Heart left ventricle (tissue), 16 donors: ENCODE measurements at regions of chr1 and their contacts with region 1.

Region 1: GRCh38 chr1:110209715-110210603 is at the start of gene KCNC4:
- DNase-seq: peak; percentile 92 to 95 (median 92)
- ATAC-seq: peak; percentile 78 to 95 (median 93)
- H3K4me3 ChIP-seq: peak within 1 kb of the TSS; percentile 60 to 90 (median 82)
- H3K27ac ChIP-seq: peak within 1 kb of the TSS; percentile 60 to 93 (median 87)
- H3K4me1 ChIP-seq: peaks cover 0 to 52% (median 22%) of the 10 kb centered on the region in 12 donors
- H3K27me3 ChIP-seq: peaks cover 0 to 13% (median 0%) of the 10 kb centered on the region in 9 donors
- CTCF ChIP-seq: peak in 4 of 12 donors; percentile 4 to 16 (median 7)
- POLR2A ChIP-seq: peak in 1 of 2 donors; percentile 58
- total RNA-seq, gene KCNC4: 4.9 to 15.2 (median 6.7) TPM

Region 2: DNA sequence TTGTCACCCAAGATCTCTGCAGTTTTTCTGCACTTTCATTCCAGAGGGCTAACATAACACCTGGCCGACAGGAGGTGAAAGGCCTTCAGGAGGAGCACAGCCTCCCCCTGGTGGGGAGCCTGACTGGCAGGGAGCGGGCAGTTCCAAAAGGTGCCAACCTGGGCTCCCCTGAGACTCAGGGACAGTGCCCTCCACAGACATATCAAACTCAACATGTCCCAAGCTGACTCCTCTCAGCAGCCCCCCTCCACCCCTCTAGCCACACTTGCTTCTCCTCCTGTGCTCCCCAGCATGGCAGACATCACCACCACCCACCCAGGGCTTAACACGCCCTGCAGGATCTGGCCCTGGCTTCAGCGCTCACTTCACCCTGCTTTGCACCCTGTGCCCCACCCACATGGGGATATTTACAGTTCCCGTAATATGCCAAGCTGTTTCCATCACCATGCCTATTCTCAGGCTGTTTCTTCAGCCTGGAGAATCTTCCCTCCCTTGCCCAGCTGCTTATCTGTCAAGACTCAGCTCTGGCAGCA is 229.2 kb before region 1 on chr1:
- intact Hi-C with region 1: no loop called
- DNase-seq: no peak
- ATAC-seq: no peak
- H3K4me3 ChIP-seq: no peak overlapping the region
- H3K27ac ChIP-seq: no peak overlapping the region
- H3K4me1 ChIP-seq: peaks cover 0 to 57% (median 32%) of the 10 kb centered on the region in 12 donors
- H3K27me3 ChIP-seq: no peaks in the 10 kb centered on the region
- CTCF ChIP-seq: peak in 11 of 12 donors; percentile 33 to 68 (median 51)
- POLR2A ChIP-seq: no peak

Region 3: GRCh38 chr1:110243574-110243973 is 33.6 kb after region 1 on chr1:
- intact Hi-C with region 1: no loop called
- DNase-seq: no peak
- ATAC-seq: no peak
- H3K4me3 ChIP-seq: no peak overlapping the region
- H3K27ac ChIP-seq: no peak overlapping the region
- H3K4me1 ChIP-seq: peaks cover 0 to 16% (median 3%) of the 10 kb centered on the region in 12 donors
- H3K27me3 ChIP-seq: no peaks in the 10 kb centered on the region
- CTCF ChIP-seq: no peak
- POLR2A ChIP-seq: no peak

Region 4: DNA sequence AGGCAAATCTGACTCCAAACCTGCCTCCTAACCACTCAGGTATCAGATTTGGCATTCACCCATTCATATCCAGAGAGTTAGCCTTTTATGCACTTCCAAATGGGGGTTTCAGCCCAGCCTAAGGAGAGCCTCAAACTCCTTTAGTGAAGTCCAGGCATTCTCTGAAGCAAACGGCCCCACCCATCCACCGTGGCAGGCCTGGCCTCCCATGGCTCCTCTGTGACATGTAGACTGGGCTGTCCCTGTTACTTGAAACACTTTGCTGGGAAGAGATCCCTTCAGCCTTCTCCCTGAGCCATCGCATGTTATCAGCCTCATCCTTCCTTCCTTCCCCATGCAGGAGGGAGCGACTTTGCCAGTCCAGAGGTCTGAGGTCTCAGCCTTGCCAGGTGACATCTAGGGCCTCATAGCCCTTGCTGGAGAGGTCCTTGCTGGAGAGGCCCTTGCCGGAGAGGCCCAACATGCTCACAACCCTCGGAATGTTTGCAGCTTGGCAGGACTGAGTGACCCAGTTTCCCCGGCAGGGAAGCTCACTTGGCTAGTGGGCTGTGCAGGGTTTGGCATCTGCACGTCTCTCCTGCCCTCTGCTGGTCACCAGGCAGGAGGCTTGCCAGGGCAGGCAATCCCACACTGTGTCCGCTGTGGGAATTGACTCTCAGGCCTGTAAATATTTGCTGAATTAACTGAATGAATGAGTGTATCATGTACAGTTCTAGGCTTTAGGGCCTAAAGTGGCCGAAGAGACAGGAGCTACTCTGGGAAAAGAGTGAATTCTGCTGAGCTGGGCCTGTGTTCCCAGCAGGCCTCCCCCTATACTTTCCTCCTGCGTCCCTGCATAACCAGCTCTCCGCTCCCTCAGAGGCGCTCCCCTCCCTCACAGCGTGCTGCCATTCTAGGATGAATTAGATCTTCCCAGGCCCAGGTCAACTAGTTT is 102.5 kb after region 1 on chr1:
- intact Hi-C with region 1: loop called (anchors 1 kb)
- DNase-seq: peak; percentile 83 to 89 (median 85)
- ATAC-seq: peak; percentile 89 to 96 (median 94)
- H3K4me3 ChIP-seq: no peak overlapping the region
- H3K27ac ChIP-seq: no peak overlapping the region
- H3K4me1 ChIP-seq: peaks cover 0 to 50% (median 17%) of the 10 kb centered on the region in 12 donors
- H3K27me3 ChIP-seq: no peaks in the 10 kb centered on the region
- CTCF ChIP-seq: peak; percentile 84 to 98 (median 94)
- POLR2A ChIP-seq: no peak

Region 5: DNA sequence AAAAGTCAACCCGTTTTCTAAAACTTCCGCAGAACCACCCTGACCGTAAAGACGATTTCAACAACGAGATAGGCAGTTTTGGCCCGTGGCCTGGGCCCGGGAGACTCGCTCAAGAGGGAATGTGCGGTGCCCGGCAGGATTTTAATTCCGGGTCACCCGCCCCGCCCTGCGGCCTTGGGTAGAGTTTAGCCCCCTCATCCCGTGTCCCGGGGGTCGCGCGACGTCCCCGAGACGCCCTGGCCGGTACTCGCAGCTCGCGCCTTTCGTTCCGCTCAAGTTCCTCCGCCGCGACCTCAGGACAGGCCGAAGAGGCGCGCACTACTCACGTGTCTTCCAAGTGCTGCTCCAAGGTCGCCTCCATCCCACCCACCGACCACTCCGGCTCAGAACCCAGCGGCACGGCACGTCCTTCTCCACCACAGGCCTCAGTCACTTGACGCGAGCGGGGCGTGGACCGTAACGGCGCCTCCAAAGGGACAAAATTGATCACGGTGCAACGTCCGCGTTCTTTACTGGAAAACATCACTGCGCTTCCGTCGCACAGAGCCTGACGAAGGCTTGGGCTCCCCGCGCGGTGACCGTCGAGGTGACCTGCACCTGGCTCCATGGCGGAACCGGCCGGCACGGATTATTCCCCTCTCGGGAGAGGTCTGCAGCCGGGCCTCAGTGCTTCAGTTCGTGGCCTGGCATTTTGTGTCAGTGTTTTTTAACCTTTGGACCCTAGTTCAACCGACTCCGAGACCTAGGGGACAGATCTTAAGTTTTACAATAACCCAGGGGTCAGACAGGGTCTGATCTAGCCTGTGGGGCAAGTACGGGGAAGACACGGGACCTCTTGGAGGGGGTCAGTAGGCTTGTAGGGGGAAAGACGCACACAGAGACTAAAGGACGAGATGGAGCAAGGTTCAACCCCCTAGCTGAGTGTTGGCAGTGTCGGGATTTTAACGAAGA is 197.6 kb after region 1 on chr1 and contains the start of gene LAMTOR5:
- intact Hi-C with region 1: loop called in 6 of 10 experiments (anchors 5 kb)
- DNase-seq: peak; percentile 95 to 96 (median 96)
- ATAC-seq: peak; percentile 94 to 98 (median 97)
- H3K4me3 ChIP-seq: peak within 1 kb of the TSS; percentile 65 to 100 (median 84)
- H3K27ac ChIP-seq: peak within 1 kb of the TSS; percentile 84 to 97 (median 93)
- H3K4me1 ChIP-seq: peaks cover 0 to 27% (median 19%) of the 10 kb centered on the region in 12 donors
- H3K27me3 ChIP-seq: no peaks in the 10 kb centered on the region
- CTCF ChIP-seq: peak in 6 of 12 donors; percentile 13 to 32 (median 20)
- POLR2A ChIP-seq: peak; percentile 20 to 82
- total RNA-seq, gene LAMTOR5: 130 to 267 (median 221) TPM

Region 6: GRCh38 chr1:110495926-110496600 is 286.1 kb after region 1 on chr1:
- intact Hi-C with region 1: loop called in 3 of 10 experiments (anchors 5 to 10 kb)
- DNase-seq: peak in 4 of 5 donors; percentile 62 to 77 (median 68)
- ATAC-seq: peak; percentile 60 to 88 (median 81)
- H3K4me3 ChIP-seq: no peak overlapping the region
- H3K27ac ChIP-seq: no peak overlapping the region
- H3K4me1 ChIP-seq: no peaks in the 10 kb centered on the region
- H3K27me3 ChIP-seq: no peaks in the 10 kb centered on the region
- CTCF ChIP-seq: peak; percentile 78 to 94 (median 90)
- POLR2A ChIP-seq: no peak